ENCODE measurements at regions of chr10 and their contacts with region 1.

Region 1: DNA sequence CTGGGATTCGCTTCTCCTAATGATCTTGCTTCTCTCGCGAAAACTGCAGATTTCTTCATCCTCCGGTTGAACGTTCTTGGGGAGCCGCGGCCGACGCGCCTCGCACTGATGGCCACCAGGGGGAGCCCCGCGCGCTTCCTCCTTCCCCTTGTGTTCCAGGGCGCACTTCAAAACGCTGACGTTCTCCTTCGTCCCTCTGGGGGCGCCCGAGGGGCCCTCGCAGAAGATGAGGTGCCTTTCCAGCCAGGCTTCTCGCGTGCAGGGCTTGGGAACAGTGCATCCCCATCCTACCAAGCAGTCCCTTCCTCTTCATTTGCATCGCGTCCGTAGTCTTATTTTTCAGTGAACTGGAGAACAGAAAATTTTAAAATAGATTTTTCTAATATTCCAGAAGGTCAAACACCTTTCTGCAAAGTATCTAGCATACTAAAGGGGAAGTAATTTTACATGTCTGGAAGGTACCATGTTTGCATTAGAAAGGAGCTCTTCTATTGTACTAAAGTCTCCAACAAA is 22.5 kb downstream of the GSTO2 start:
- DNase-seq: peak; percentile 82 to 92
- H3K4me3 ChIP-seq: no peak overlapping the region
- H3K27ac ChIP-seq: no peak overlapping the region
- H3K4me1 ChIP-seq: no peaks in the 10 kb centered on the region
- H3K27me3 ChIP-seq: no peaks in the 10 kb centered on the region
- CTCF ChIP-seq: peak; percentile 98 to 100 (median 99)
- POLR2A ChIP-seq: no peak

Region 2: GRCh38 chr10:103983367-103983911 is 308.1 kb before region 1 on chr10:
- intact Hi-C with region 1: no loop called
- DNase-seq: no peak
- H3K4me3 ChIP-seq: no peak overlapping the region
- H3K27ac ChIP-seq: no peak overlapping the region
- H3K4me1 ChIP-seq: no peaks in the 10 kb centered on the region
- H3K27me3 ChIP-seq: no peaks in the 10 kb centered on the region
- CTCF ChIP-seq: no peak
- POLR2A ChIP-seq: no peak

Region 3: DNA sequence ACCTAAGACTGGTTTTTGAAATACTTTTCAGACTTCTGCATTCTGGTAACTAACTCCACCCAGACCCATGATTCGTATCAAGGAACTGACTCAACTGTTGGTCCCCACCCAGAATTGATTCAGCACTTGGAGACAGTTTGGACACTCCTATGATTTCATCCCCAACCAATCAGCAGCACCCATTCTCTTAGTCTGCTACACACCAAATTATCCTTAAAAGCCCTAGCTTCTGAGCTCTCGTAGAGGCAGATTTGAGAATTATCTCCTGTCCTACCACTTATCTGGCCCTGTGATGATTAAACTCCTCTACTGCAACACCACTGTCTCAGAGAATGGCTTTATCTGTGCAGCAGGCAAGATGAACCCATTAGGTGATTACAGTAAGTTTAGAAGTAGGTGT is 44.5 kb before region 1 on chr10:
- intact Hi-C with region 1: no loop called
- DNase-seq: no peak
- H3K4me3 ChIP-seq: no peak overlapping the region
- H3K27ac ChIP-seq: no peak overlapping the region
- H3K4me1 ChIP-seq: no peaks in the 10 kb centered on the region
- H3K27me3 ChIP-seq: no peaks in the 10 kb centered on the region
- CTCF ChIP-seq: no peak
- POLR2A ChIP-seq: no peak

Region 4: GRCh38 chr10:104387130-104387888 is 95.8 kb after region 1 on chr10:
- intact Hi-C with region 1: no loop called
- DNase-seq: no peak
- H3K4me3 ChIP-seq: no peak overlapping the region
- H3K27ac ChIP-seq: no peak overlapping the region
- H3K4me1 ChIP-seq: no peaks in the 10 kb centered on the region
- H3K27me3 ChIP-seq: no peaks in the 10 kb centered on the region
- CTCF ChIP-seq: no peak
- POLR2A ChIP-seq: no peak

Region 5: GRCh38 chr10:104680467-104681401 is 389.2 kb after region 1 on chr10:
- intact Hi-C with region 1: loop called (anchors 5 kb)
- DNase-seq: no peak
- H3K4me3 ChIP-seq: peak overlapping the region in 2 of 3 donors; percentile 35 to 39
- H3K27ac ChIP-seq: no peak overlapping the region
- H3K4me1 ChIP-seq: no peaks in the 10 kb centered on the region
- H3K27me3 ChIP-seq: peaks cover 0 to 5% of the 10 kb centered on the region in 2 donors
- CTCF ChIP-seq: no peak
- POLR2A ChIP-seq: no peak

Measured in breast epithelium (tissue), 4 donors.